Right lobe of liver (tissue), 6 donors: ENCODE measurements at regions of chr9 and their contacts with region 1.

Region 1: DNA sequence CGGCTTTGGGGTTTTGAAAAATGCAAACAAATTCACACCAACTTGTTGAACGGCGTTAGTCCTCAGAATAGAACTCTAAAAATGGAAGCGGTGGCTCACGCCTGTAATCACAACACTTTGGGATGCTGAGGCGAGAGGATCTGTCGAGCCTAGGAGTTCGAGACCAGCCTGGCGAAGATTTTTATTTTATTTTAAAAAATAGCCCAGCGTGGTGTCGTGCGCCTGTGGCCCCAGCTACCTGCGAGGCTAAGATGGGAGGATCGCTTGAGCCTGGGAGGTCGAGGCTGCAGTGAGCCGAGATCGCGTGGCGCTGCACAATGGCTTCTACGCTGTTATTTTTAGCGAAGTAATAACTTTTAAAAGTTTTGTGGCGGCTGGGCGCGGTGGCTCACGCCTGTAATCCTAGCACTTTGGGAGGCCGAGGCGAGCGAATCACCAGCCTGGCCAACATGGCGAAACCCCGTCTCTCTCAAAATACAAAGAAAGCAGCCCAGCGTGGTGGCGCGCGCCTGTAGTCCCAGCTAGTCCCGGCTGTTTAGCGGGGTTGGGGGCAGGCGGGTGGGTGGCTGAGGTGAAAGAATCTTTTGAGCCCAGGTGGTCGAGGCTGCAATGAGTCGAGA is 699 bp upstream of the PLIN2 start:
- DNase-seq: peak in 2 of 3 donors; percentile 43 to 62
- ATAC-seq: peak; percentile 0 to 11 (median 2)
- H3K4me3 ChIP-seq: peak overlapping the region; percentile 84 to 98 (median 94)
- H3K27ac ChIP-seq: peak overlapping the region; percentile 97 to 99 (median 98)
- H3K4me1 ChIP-seq: peaks cover 0 to 53% (median 13%) of the 10 kb centered on the region in 4 donors
- H3K27me3 ChIP-seq: no peaks in the 10 kb centered on the region
- CTCF ChIP-seq: no peak
- POLR2A ChIP-seq: no peak

Region 2: GRCh38 chr9:18985464-18985951 is 142.5 kb before region 1 on chr9:
- intact Hi-C with region 1: no loop called
- DNase-seq: no peak
- ATAC-seq: no peak
- H3K4me3 ChIP-seq: no peak overlapping the region
- H3K27ac ChIP-seq: no peak overlapping the region
- H3K4me1 ChIP-seq: no peaks in the 10 kb centered on the region
- H3K27me3 ChIP-seq: no peaks in the 10 kb centered on the region
- CTCF ChIP-seq: no peak
- POLR2A ChIP-seq: no peak

Region 3: DNA sequence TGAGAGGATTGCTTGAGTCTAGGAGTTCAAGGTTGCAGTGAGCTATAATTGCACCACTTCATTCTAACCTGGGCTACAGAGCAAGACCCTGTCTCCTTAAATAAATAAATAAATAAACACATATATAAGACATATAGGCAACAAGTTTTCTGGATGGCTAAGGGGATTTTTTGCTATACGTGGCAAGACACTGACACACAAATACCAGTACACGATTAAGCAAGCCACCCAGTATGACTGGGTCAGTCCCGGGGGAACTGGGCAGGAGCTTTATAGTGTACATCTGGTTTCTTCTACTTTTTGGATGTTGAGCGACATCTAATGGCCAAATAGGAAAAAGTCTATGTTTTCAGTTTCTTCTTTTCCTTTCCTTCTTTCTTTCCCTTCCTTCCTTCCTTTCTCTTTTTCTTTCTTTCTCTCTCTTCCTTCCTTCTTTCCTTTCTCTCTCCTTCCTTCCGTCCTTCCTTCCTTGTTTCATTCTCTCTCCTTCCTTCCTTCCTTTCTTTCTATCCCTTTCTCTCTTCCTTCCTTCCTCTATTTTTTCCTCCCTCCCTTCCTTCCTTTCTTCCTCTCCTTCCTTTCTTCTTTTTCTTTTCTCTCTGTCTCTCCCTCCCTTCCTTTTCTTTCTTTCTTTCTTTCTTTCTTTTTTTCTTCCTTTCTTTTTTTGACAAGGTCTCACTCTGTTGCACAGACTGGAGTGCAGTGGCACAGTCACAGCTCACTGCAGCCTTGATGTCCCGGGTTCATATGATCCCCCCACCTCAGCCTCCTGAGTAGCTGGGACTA is 46.3 kb after region 1 on chr9:
- intact Hi-C with region 1: loop called in 1 of 2 experiments (anchors 10 kb)
- DNase-seq: peak in 2 of 3 donors; percentile 52 to 61
- ATAC-seq: peak; percentile 82 to 93 (median 86)
- H3K4me3 ChIP-seq: no peak overlapping the region
- H3K27ac ChIP-seq: peak overlapping the region; percentile 41 to 79 (median 66)
- H3K4me1 ChIP-seq: peaks cover 0 to 31% (median 18%) of the 10 kb centered on the region in 4 donors
- H3K27me3 ChIP-seq: no peaks in the 10 kb centered on the region
- CTCF ChIP-seq: peak; percentile 60 to 67 (median 65)
- POLR2A ChIP-seq: peak; percentile 10